PC-9 (cell line): ENCODE measurements at regions of chr16 and their contacts with region 1.

Region 1: GRCh38 chr16:63289852-63290460 is 1253.7 kb upstream of the CDH8 start:
- DNase-seq: peak in 1 of 2 experiments; percentile 27
- H3K4me3 ChIP-seq: no peak overlapping the region
- H3K27ac ChIP-seq: no peak overlapping the region
- H3K4me1 ChIP-seq: no peaks in the 10 kb centered on the region
- H3K27me3 ChIP-seq: peaks cover 4% of the 10 kb centered on the region; the same call in 1 of the 2 replicates
- CTCF ChIP-seq: peak; percentile 71

Region 2: GRCh38 chr16:62190426-62190825 is 1099.5 kb before region 1 on chr16:
- CTCF ChIA-PET with region 1: interaction called, 5 read pairs
- POLR2A ChIA-PET with region 1: no interaction called
- intact Hi-C with region 1: loop called (anchors 10 kb)
- DNase-seq: no peak
- H3K4me3 ChIP-seq: no peak overlapping the region
- H3K27ac ChIP-seq: no peak overlapping the region
- H3K4me1 ChIP-seq: no peaks in the 10 kb centered on the region
- H3K27me3 ChIP-seq: no peaks in the 10 kb centered on the region
- CTCF ChIP-seq: peak; percentile 56

Region 3: GRCh38 chr16:62225697-62226280 is 1064.2 kb before region 1 on chr16:
- CTCF ChIA-PET with region 1: no interaction called
- POLR2A ChIA-PET with region 1: no interaction called
- intact Hi-C with region 1: loop called (anchors 5 kb)
- DNase-seq: peak; percentile 44 to 71
- H3K4me3 ChIP-seq: no peak overlapping the region
- H3K27ac ChIP-seq: no peak overlapping the region
- H3K4me1 ChIP-seq: no peaks in the 10 kb centered on the region
- H3K27me3 ChIP-seq: 0 out of 2 replicates have a peak, but pooled peaks cover 3% of the 10 kb centered on the region
- CTCF ChIP-seq: peak; percentile 68

Region 4: GRCh38 chr16:62817034-62817433 is 472.9 kb before region 1 on chr16:
- CTCF ChIA-PET with region 1: no interaction called
- POLR2A ChIA-PET with region 1: no interaction called
- intact Hi-C with region 1: no loop called
- DNase-seq: no peak
- H3K4me3 ChIP-seq: no peak overlapping the region
- H3K27ac ChIP-seq: no peak overlapping the region
- H3K4me1 ChIP-seq: no peaks in the 10 kb centered on the region
- H3K27me3 ChIP-seq: no peaks in the 10 kb centered on the region
- CTCF ChIP-seq: no peak

Region 5: GRCh38 chr16:63363738-63364137 is 73.8 kb after region 1 on chr16:
- CTCF ChIA-PET with region 1: no interaction called
- POLR2A ChIA-PET with region 1: no interaction called
- intact Hi-C with region 1: no loop called
- DNase-seq: no peak
- H3K4me3 ChIP-seq: no peak overlapping the region
- H3K27ac ChIP-seq: no peak overlapping the region
- H3K4me1 ChIP-seq: no peaks in the 10 kb centered on the region
- H3K27me3 ChIP-seq: no peaks in the 10 kb centered on the region
- CTCF ChIP-seq: no peak

Region 6: GRCh38 chr16:63553980-63554379 is 264.0 kb after region 1 on chr16:
- CTCF ChIA-PET with region 1: no interaction called
- POLR2A ChIA-PET with region 1: no interaction called
- intact Hi-C with region 1: no loop called
- DNase-seq: no peak
- H3K4me3 ChIP-seq: no peak overlapping the region
- H3K27ac ChIP-seq: no peak overlapping the region
- H3K4me1 ChIP-seq: no peaks in the 10 kb centered on the region
- H3K27me3 ChIP-seq: no peaks in the 10 kb centered on the region
- CTCF ChIP-seq: no peak